ENCODE measurements at regions of chr7 and their contacts with region 1.

Region 1: DNA sequence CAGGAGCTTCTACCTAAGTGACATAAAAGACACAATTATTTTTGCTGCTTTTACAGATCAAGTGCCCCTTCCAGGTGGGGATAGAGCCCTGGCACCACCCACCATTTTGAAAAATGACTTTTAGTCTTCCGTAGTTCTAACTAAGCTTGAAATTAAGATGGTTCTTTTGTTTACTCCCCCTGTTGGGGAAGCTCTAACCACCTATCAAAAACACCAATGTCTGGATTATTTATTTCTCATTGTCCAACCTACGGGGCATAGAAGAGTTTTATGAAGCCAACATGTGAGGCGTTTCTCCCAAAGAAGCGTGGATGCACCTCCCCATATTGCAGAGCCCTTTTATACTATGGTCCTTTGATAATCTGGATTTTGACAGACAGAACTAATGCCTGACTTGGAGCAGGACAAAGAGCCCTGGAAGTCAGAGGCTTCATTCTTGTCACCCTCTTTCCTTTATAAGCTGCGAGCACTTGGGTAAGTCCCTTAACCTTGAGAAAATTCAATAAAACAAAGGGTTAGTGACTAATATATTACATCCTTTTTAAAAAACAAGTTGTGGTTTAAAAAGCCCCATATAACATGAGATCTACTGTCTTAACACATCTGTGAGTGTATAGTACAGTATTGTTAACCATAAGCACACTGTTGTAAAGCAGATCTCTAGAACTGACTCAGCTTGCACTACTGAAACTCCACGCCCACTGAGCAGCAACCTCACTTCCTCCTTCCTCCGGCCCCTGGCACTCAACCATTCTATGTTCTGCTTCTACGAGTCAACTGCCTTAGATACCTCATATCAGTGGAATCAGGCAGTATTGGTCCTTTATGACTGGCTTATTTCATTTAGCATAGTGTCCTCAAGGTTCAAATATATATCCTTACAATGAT is 67.5 kb downstream of the ATXN7L1 start:
- DNase-seq: peak; percentile 87 to 95 (median 89)
- H3K4me3 ChIP-seq: no peak overlapping the region
- H3K4me3 Mint-ChIP-seq: no peak overlapping the region
- H3K27ac ChIP-seq: peak overlapping the region; percentile 19 to 75
- H3K27ac Mint-ChIP-seq: peak overlapping the region; percentile 55 to 92 (median 85)
- H3K4me1 ChIP-seq: peaks cover 30 to 38% of the 10 kb centered on the region in 2 donors
- H3K4me1 Mint-ChIP-seq: peaks cover 53% of the 10 kb centered on the region
- H3K27me3 ChIP-seq: no peaks in the 10 kb centered on the region
- H3K27me3 Mint-ChIP-seq: peaks cover 0 to 3% (median 0%) of the 10 kb centered on the region in 3 donors
- CTCF ChIP-seq: no peak

Region 2: DNA sequence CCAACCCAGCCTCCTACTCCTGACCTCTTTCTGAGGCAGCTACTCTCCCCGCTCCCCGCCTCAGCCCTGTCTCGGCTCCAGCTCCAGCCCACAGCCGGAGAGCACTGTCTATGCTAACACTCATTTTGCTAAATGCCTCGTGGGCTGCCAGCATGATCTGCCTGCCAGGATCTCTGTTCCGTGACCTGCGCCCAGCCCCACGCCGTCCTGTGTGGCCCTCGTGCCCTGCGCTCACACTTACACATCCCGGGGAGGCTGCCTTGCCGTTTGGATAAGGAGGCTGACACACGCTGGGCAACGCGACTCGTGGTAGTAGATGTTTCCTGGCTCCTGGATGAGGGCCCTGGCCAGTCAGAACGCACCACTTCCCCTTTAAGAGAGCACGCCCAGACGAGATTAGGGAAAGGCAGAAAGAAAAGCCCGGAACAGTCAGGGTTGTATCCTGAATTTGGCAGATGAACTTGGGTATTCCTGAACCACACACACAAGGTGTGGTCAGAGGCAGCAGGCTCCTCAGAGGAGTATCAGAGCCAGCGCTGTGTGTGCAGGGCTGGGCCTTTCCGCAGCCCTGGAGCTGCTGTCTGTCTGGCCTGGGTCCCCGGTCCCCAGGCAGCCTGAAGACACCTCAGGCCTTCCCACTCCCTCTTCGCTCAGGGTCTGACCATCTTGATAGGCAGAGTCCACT is 130.0 kb before region 1 on chr7:
- intact Hi-C with region 1: loop called in 1 of 2 experiments (anchors 10 kb)
- DNase-seq: peak; percentile 70 to 84 (median 80)
- H3K4me3 ChIP-seq: peak overlapping the region; percentile 62 to 90 (median 72)
- H3K4me3 Mint-ChIP-seq: peak overlapping the region; percentile 95 to 98
- H3K27ac ChIP-seq: peak overlapping the region; percentile 85 to 96
- H3K27ac Mint-ChIP-seq: peak overlapping the region; percentile 94 to 98 (median 95)
- H3K4me1 ChIP-seq: peaks cover 61 to 73% of the 10 kb centered on the region in 2 donors
- H3K4me1 Mint-ChIP-seq: peaks cover 81% of the 10 kb centered on the region
- H3K27me3 ChIP-seq: no peaks in the 10 kb centered on the region
- H3K27me3 Mint-ChIP-seq: no peaks in the 10 kb centered on the region
- CTCF ChIP-seq: no peak

Measured in CD14-positive monocyte (primary cell).